ENCODE measurements at regions of chr10 and their contacts with region 1.

Region 1: GRCh38 chr10:34584164-34584563 is 230.9 kb downstream of the PARD3 start:
- DNase-seq: peak; percentile 72
- ATAC-seq: no peak
- H3K4me3 ChIP-seq: no peak overlapping the region
- H3K27ac ChIP-seq: no peak overlapping the region
- H3K4me1 ChIP-seq: peaks cover 74% of the 10 kb centered on the region
- H3K27me3 ChIP-seq: no peaks in the 10 kb centered on the region
- CTCF ChIP-seq: no peak

Region 2: GRCh38 chr10:34235164-34235832 is 348.9 kb before region 1 on chr10:
- CTCF ChIA-PET with region 1: no interaction called
- POLR2A ChIA-PET with region 1: no interaction called
- intact Hi-C with region 1: loop called (anchors 1 kb)
- DNase-seq: peak; percentile 100
- ATAC-seq: peak; percentile 100
- H3K4me3 ChIP-seq: peak overlapping the region; percentile 42
- H3K27ac ChIP-seq: peak overlapping the region; percentile 47
- H3K4me1 ChIP-seq: peaks cover 18% of the 10 kb centered on the region
- H3K27me3 ChIP-seq: no peaks in the 10 kb centered on the region
- CTCF ChIP-seq: no peak

Region 3: DNA sequence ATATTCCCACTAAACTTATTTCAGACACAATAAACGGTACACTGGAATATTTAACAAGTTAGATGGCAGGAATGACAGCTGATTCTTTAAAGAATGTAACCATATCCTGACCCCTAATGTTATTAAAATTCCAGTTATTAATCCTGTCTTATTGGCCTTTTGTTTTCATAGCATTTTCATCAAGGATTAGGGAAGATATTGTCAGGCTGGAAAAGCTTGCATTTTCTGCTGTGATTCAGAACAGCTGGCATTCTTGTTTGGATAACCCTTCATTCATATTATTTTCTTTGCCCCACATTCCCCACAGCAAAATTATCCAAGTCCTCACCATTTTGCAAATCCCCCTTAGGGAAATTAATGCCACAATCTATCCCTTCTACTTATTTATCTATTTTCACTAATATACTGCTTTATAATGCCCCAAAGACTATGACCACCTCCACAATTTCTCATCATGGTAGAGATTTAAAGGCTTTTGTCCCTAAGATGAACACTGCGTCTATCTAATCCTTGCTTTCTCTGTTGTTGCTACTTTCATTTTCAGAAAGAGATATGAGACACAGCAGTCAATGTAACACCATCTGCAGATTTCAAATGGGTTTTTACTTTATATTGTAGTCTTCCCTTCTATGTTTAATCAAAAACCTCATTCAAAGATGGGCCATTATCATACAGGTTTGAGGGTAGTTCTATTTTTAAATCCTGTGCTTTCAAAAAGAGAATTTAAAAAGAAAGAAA is 244.2 kb before region 1 on chr10:
- CTCF ChIA-PET with region 1: no interaction called
- POLR2A ChIA-PET with region 1: no interaction called
- intact Hi-C with region 1: loop called (anchors 5 kb)
- DNase-seq: no peak
- ATAC-seq: no peak
- H3K4me3 ChIP-seq: no peak overlapping the region
- H3K27ac ChIP-seq: no peak overlapping the region
- H3K4me1 ChIP-seq: peaks cover 16% of the 10 kb centered on the region
- H3K27me3 ChIP-seq: no peaks in the 10 kb centered on the region
- CTCF ChIP-seq: no peak

Region 4: DNA sequence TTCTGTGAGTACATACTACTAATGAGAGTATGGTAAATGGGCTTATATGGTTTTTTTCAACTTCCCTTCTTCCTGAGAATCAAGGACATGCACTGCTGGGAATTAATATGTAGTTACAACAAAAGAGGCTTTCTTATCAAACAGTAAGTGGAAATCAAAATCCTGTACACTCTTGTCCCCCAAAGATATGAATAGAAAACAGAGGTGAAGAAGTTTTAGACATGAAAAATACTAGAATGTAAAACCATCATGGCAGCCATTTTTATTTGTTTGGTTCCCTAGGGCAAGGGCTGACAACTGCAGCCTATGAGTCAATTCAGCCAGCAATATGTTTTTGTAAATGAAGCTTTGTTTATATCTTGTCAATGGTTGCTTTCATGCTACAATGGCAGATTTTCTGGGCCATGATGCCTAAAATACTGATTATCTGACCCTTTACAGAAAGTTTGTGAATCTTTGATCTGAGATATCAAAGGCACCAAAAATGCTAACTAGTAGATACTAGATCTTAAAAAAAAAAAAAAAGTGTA is 191.5 kb before region 1 on chr10:
- CTCF ChIA-PET with region 1: no interaction called
- POLR2A ChIA-PET with region 1: no interaction called
- intact Hi-C with region 1: no loop called
- DNase-seq: peak; percentile 30
- ATAC-seq: peak; percentile 45; the same call in 1 of the 2 replicates
- H3K4me3 ChIP-seq: no peak overlapping the region
- H3K27ac ChIP-seq: no peak overlapping the region
- H3K4me1 ChIP-seq: no peaks in the 10 kb centered on the region
- H3K27me3 ChIP-seq: no peaks in the 10 kb centered on the region
- CTCF ChIP-seq: no peak

Region 5: DNA sequence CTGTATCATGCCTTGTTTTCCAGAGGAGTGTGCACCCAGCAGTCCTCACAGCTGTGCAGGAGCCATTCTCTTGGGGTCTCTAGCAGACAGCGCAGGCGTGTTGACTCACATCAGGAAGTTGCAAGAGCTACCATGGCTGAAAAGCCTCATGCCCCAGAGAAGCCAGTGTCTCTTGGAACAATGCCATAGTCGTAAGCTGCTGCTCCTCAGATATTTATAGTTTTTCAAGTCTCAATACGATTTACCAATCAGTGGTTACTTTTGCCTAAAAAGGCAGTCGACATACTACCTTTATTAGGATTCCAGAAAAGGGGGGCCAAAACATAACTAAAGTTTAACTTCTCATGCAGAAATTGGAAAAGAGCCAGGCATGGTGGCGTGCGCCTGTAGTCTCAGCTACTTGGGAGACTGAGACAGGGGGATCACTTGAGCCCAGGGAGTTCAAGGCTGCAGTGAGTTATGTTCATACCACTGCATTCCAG is 176.8 kb before region 1 on chr10:
- CTCF ChIA-PET with region 1: no interaction called
- POLR2A ChIA-PET with region 1: interaction called, 9 read pairs
- intact Hi-C with region 1: loop called (anchors 5 kb)
- DNase-seq: no peak
- ATAC-seq: no peak
- H3K4me3 ChIP-seq: no peak overlapping the region
- H3K27ac ChIP-seq: no peak overlapping the region
- H3K4me1 ChIP-seq: peaks cover 17% of the 10 kb centered on the region
- H3K27me3 ChIP-seq: no peaks in the 10 kb centered on the region
- CTCF ChIP-seq: no peak

Region 6: DNA sequence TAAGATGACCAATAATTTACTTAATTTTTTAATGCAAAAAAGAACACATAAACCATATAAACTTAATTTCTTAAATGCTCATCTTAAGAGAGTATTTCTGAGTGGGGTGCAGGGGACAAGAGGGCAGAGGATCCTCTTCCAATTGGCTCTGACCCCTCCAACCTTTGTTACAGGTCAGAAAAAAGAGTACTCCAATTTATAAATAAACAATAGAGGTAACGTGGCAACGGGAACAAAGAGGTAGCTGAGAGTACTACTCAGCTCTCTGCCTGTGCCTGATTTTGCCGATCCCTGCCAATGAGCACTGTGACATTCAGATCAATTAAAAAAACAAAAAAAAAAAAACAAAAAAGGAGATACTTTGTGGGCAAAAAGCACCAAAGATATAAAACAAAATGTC is 76.9 kb before region 1 on chr10:
- CTCF ChIA-PET with region 1: no interaction called
- POLR2A ChIA-PET with region 1: no interaction called
- intact Hi-C with region 1: no loop called
- DNase-seq: no peak
- ATAC-seq: no peak
- H3K4me3 ChIP-seq: no peak overlapping the region
- H3K27ac ChIP-seq: no peak overlapping the region
- H3K4me1 ChIP-seq: peaks cover 14% of the 10 kb centered on the region
- H3K27me3 ChIP-seq: no peaks in the 10 kb centered on the region
- CTCF ChIP-seq: no peak

Region 7: DNA sequence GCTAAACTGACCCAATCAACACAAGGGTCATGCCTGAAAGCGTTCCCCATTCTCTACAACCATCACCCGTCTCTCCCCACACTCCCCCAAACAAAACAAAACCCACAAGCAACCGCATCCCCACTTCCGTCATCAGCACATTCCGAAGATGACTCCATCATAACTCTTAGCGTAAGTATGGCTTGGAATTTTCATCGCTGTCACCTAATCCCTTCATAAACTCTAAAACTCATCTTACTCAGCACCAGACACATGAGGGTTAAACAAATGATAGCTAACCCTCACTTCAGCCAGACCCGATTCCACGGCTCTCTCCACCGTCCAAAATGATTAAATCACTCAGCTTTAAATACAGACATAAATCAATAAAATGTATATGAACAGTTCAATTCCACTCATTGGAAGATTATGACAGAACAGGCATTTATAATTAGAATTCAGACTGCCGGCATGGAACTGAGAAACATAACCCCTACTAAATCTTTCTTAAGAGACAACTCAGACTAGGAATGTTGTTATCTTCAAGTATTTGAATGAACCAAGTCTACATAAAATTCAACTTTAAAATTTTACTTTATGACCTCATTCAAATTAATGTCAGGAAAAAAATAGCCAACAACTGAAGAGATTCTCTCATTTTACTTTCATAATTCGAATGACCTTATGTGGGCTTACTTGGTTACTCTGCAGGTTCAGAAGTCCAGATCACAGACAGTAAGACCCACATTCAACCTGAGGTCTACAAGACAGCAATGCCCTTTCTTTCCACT is 15.0 kb after region 1 on chr10:
- CTCF ChIA-PET with region 1: no interaction called
- POLR2A ChIA-PET with region 1: interaction called, 15 read pairs
- intact Hi-C with region 1: no loop called
- DNase-seq: no peak
- ATAC-seq: no peak
- H3K4me3 ChIP-seq: no peak overlapping the region
- H3K27ac ChIP-seq: no peak overlapping the region
- H3K4me1 ChIP-seq: no peaks in the 10 kb centered on the region
- H3K27me3 ChIP-seq: no peaks in the 10 kb centered on the region
- CTCF ChIP-seq: no peak

Region 8: GRCh38 chr10:34696423-34696822 is 112.3 kb after region 1 on chr10:
- CTCF ChIA-PET with region 1: no interaction called
- POLR2A ChIA-PET with region 1: no interaction called
- intact Hi-C with region 1: no loop called
- DNase-seq: peak; percentile 99
- ATAC-seq: peak; percentile 74
- H3K4me3 ChIP-seq: no peak overlapping the region
- H3K27ac ChIP-seq: peak overlapping the region; percentile 0; the same call in 1 of the 2 replicates
- H3K4me1 ChIP-seq: peaks cover 57% of the 10 kb centered on the region
- H3K27me3 ChIP-seq: no peaks in the 10 kb centered on the region
- CTCF ChIP-seq: no peak

Measured in PC-3 (cell line).